Posterior vena cava (tissue), 2 donors: ENCODE measurements at regions of chr4 and their contacts with region 1.

Region 1: GRCh38 chr4:6008092-6008551 is 10.1 kb downstream of the C4orf50 start:
- DNase-seq: peak; percentile 70

Region 2: GRCh38 chr4:6423575-6423974 is 415.5 kb after region 1 on chr4:
- intact Hi-C with region 1: loop called in 1 of 2 experiments (anchors 2 kb)
- DNase-seq: no peak

Region 3: GRCh38 chr4:6493658-6494304 is 485.7 kb after region 1 on chr4:
- intact Hi-C with region 1: no loop called
- DNase-seq: peak; percentile 51